ENCODE measurements at regions of chr11 and their contacts with region 1.

Region 1: DNA sequence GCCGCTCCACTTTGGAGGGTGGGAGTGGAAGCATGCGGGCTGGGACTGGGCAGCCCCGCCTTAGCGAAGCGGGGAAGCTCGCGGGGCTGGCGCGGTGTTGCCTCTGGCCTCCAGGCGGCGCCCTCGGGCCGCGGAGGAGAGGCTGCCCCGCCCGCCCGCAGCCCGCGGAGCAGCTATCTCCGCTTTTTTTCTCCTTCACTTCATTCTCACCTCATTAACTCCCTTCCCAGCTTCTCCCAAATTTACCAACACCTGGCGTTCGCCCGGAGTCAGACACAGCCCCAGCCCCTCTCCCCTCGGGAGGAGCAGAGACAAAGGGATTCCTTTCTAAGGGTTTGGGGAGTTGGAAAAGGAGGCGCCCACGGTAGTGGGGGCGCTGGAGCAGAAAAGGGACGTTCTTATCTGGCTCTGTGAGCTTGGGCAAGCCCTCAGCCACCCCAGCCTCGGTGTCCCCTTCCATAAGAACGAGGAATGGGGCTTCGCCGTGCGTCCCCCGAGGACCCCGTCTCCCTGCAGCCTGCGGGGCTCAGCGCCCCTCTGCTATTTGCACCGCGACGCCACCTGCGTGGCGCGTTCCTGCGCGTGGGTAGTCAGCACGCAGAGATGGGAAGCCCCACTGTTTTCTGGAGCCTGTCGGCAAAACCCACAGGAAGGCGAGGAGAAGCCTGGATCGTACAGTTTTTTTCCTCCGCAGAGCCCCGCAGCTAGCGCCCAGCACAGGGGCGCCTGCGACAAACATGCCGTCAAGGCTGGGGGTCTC is 1.5 kb upstream of the WNT11 start:
- DNase-seq: peak; percentile 59 to 88 (median 76)
- ATAC-seq: peak; percentile 78
- H3K4me3 ChIP-seq: peak overlapping the region; percentile 63 to 66
- H3K4me3 Mint-ChIP-seq: peak overlapping the region; percentile 82
- H3K27ac ChIP-seq: no peak overlapping the region
- H3K27ac Mint-ChIP-seq: no peak overlapping the region
- H3K4me1 ChIP-seq: peaks cover 39% of the 10 kb centered on the region
- H3K4me1 Mint-ChIP-seq: peaks cover 24% of the 10 kb centered on the region
- H3K27me3 ChIP-seq: peaks cover 13 to 42% of the 10 kb centered on the region in 2 experiments
- H3K27me3 Mint-ChIP-seq: peaks cover 33% of the 10 kb centered on the region
- CTCF ChIP-seq: peak; percentile 90

Region 2: GRCh38 chr11:75896843-75897419 is 310.9 kb before region 1 on chr11:
- CTCF ChIA-PET with region 1: interaction called, 32 read pairs
- POLR2A ChIA-PET with region 1: no interaction called
- intact Hi-C with region 1: loop called in 1 of 2 experiments (anchors 1 kb)
- DNase-seq: peak in 2 of 9 experiments; percentile 31 to 48
- ATAC-seq: peak; percentile 46
- H3K4me3 ChIP-seq: no peak overlapping the region
- H3K4me3 Mint-ChIP-seq: no peak overlapping the region
- H3K27ac ChIP-seq: no peak overlapping the region
- H3K27ac Mint-ChIP-seq: no peak overlapping the region
- H3K4me1 ChIP-seq: no peaks in the 10 kb centered on the region
- H3K4me1 Mint-ChIP-seq: peaks cover 1% of the 10 kb centered on the region
- H3K27me3 ChIP-seq: no peaks in the 10 kb centered on the region
- H3K27me3 Mint-ChIP-seq: no peaks in the 10 kb centered on the region
- CTCF ChIP-seq: peak; percentile 85

Region 3: DNA sequence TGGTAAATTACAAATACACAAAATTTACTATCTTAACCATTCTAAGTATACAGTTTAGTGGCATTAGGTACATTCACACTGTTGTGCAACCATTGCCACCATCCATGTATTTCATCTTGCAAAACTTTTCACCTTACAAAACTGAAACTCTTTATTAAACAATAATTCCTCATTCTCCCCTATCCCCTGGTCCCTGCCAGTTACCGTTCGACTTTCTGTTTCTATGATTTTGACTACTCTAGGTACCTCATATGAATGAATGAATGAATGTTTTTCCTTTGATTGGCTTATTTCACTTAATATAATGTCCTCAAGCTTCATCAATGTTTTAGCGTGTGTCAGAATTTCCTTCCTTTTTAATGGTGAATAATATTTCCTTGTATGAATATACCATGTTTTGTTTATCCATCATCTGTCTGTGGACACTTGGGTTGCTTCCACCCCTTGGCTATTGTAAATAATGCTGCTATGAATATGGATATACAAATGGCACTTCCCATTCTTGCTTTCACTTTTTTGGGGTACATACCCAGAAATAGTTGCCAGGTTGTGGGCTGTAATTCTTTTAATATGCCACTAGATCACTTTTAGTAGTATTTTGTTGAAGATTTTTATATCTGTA is 299.8 kb before region 1 on chr11:
- CTCF ChIA-PET with region 1: no interaction called
- POLR2A ChIA-PET with region 1: no interaction called
- intact Hi-C with region 1: no loop called
- DNase-seq: no peak
- ATAC-seq: no peak
- H3K4me3 ChIP-seq: no peak overlapping the region
- H3K4me3 Mint-ChIP-seq: no peak overlapping the region
- H3K27ac ChIP-seq: no peak overlapping the region
- H3K27ac Mint-ChIP-seq: no peak overlapping the region
- H3K4me1 ChIP-seq: no peaks in the 10 kb centered on the region
- H3K4me1 Mint-ChIP-seq: peaks cover 12% of the 10 kb centered on the region
- H3K27me3 ChIP-seq: no peaks in the 10 kb centered on the region
- H3K27me3 Mint-ChIP-seq: no peaks in the 10 kb centered on the region
- CTCF ChIP-seq: no peak

Region 4: GRCh38 chr11:76235233-76236091 is 27.6 kb after region 1 on chr11:
- CTCF ChIA-PET with region 1: interaction called, 81 read pairs
- POLR2A ChIA-PET with region 1: interaction called, 46 read pairs
- intact Hi-C with region 1: loop called (anchors 1 kb)
- DNase-seq: peak; percentile 84 to 96 (median 89)
- ATAC-seq: peak; percentile 84
- H3K4me3 ChIP-seq: peak overlapping the region; percentile 86 to 99
- H3K4me3 Mint-ChIP-seq: peak overlapping the region; percentile 90
- H3K27ac ChIP-seq: peak overlapping the region; percentile 61 to 63
- H3K27ac Mint-ChIP-seq: peak overlapping the region; percentile 89
- H3K4me1 ChIP-seq: peaks cover 47% of the 10 kb centered on the region
- H3K4me1 Mint-ChIP-seq: peaks cover 39% of the 10 kb centered on the region
- H3K27me3 ChIP-seq: no peaks in the 10 kb centered on the region
- H3K27me3 Mint-ChIP-seq: no peaks in the 10 kb centered on the region
- CTCF ChIP-seq: no peak

Region 5: DNA sequence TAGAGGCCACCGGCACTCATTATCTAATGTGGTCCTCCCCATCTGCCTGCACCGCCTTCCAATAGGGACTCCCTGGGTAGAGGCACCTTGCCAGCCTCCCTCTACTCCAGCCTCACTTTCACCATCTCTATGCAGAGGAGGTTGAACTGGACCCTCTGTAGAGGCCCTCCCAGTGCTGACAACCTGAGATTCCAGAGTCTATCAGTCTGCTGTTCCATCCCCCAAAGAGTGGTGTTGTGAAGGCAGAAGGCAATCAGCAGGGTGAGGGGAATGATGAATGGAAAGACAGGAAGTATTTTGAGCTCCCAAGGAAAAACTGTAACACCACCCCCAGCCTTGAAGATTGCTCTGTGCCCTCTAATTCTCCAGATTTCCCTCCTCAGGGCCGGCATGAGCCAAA is 95.2 kb after region 1 on chr11:
- CTCF ChIA-PET with region 1: interaction called, 24 read pairs
- POLR2A ChIA-PET with region 1: no interaction called
- intact Hi-C with region 1: no loop called
- DNase-seq: no peak
- ATAC-seq: no peak
- H3K4me3 ChIP-seq: no peak overlapping the region
- H3K4me3 Mint-ChIP-seq: no peak overlapping the region
- H3K27ac ChIP-seq: no peak overlapping the region
- H3K27ac Mint-ChIP-seq: no peak overlapping the region
- H3K4me1 ChIP-seq: no peaks in the 10 kb centered on the region
- H3K4me1 Mint-ChIP-seq: no peaks in the 10 kb centered on the region
- H3K27me3 ChIP-seq: no peaks in the 10 kb centered on the region
- H3K27me3 Mint-ChIP-seq: no peaks in the 10 kb centered on the region
- CTCF ChIP-seq: no peak

Region 6: DNA sequence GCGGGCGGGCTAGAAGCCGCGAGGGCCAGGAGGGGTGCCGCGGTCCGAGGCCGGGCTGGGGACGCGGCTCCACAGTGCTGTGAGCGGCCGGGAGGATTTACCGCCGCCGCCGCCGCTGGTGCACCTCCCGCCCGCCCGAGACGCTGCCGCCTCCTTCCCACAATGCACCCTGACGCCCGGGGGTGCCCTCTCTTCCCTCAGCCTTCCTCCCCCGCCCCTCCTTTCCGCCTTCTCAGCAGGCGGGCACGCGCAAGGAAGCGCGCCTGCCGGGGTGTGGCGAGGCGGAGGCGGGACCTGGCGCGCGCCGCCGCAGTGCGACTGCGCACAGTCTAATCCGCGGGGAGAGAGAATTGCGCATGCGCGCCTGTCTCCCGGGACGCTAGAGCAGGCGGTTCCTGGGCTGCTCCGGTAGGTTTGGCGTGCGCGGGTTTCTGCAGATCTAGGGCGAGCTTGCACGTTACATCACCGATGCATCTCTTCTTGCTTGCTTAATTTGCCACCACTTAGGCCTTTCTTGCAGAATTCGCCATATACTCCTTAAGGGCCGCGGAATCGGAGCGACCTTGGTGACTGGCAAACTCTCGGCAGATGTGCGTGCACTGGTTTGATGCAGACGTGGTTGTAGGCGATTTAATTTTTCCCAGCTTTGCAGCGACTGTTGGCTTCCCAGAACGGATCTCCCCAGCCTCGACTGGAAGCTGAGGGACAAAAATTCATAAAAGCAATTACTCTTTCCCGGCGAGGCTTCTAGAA is 173.3 kb after region 1 on chr11 and contains the starts of genes GVQW3 and THAP12:
- CTCF ChIA-PET with region 1: no interaction called
- POLR2A ChIA-PET with region 1: no interaction called
- intact Hi-C with region 1: loop called (anchors 1 to 2 kb)
- DNase-seq: peak; percentile 93 to 99 (median 97)
- ATAC-seq: peak; percentile 89
- H3K4me3 ChIP-seq: peak within 1 kb of the TSS; percentile 62 to 64
- H3K4me3 Mint-ChIP-seq: peak within 1 kb of the TSS; percentile 94
- H3K27ac ChIP-seq: peak within 1 kb of the TSS; percentile 46 to 56
- H3K27ac Mint-ChIP-seq: peak within 1 kb of the TSS; percentile 90
- H3K4me1 ChIP-seq: peaks cover 34% of the 10 kb centered on the region
- H3K4me1 Mint-ChIP-seq: peaks cover 67% of the 10 kb centered on the region
- H3K27me3 ChIP-seq: no peaks in the 10 kb centered on the region
- H3K27me3 Mint-ChIP-seq: no peaks in the 10 kb centered on the region
- CTCF ChIP-seq: no peak
- total RNA-seq, gene GVQW3: 1.4 to 1.6 TPM
- total RNA-seq, gene THAP12: 44.7 to 47.2 TPM

Region 7: GRCh38 chr11:76680518-76681425 is 472.9 kb after region 1 on chr11:
- CTCF ChIA-PET with region 1: interaction called, 6 read pairs
- POLR2A ChIA-PET with region 1: no interaction called
- intact Hi-C with region 1: loop called in 1 of 2 experiments (anchors 1 kb)
- DNase-seq: peak in 8 of 9 experiments; percentile 44 to 72 (median 62)
- ATAC-seq: peak; percentile 68
- H3K4me3 ChIP-seq: no peak overlapping the region
- H3K4me3 Mint-ChIP-seq: no peak overlapping the region
- H3K27ac ChIP-seq: no peak overlapping the region
- H3K27ac Mint-ChIP-seq: no peak overlapping the region
- H3K4me1 ChIP-seq: peaks cover 2% of the 10 kb centered on the region
- H3K4me1 Mint-ChIP-seq: peaks cover 3% of the 10 kb centered on the region
- H3K27me3 ChIP-seq: no peaks in the 10 kb centered on the region
- H3K27me3 Mint-ChIP-seq: peaks cover 2% of the 10 kb centered on the region
- CTCF ChIP-seq: peak; percentile 72

Measured in CD8-positive, alpha-beta T cell (primary cell).